Activated naive CD4-positive, alpha-beta T cell treated with anti-CD3 and anti-CD28 coated beads for 36 hours (primary cell): ENCODE measurements at regions of chr1 and their contacts with region 1.

Region 1: GRCh38 chr1:156705918-156706656 is 704 bp upstream of the CRABP2 start:
- DNase-seq: peak; percentile 77
- H3K4me3 Mint-ChIP-seq: peak overlapping the region; percentile 76
- H3K27ac Mint-ChIP-seq: peak overlapping the region; percentile 46
- H3K4me1 Mint-ChIP-seq: peaks cover 27% of the 10 kb centered on the region
- H3K27me3 Mint-ChIP-seq: peaks cover 25% of the 10 kb centered on the region

Region 2: GRCh38 chr1:156618853-156619581 is 87.1 kb before region 1 on chr1 and contains the start of gene HAPLN2:
- CTCF ChIA-PET with region 1: interaction called, 21 read pairs
- intact Hi-C with region 1: no loop called
- DNase-seq: peak; percentile 45
- H3K4me3 Mint-ChIP-seq: no peak within 1 kb of the TSS
- H3K27ac Mint-ChIP-seq: no peak within 1 kb of the TSS
- H3K4me1 Mint-ChIP-seq: no peaks in the 10 kb centered on the region
- H3K27me3 Mint-ChIP-seq: peaks cover 40% of the 10 kb centered on the region
- total RNA-seq, gene HAPLN2: 0.40 to 0.55 TPM

Region 3: DNA sequence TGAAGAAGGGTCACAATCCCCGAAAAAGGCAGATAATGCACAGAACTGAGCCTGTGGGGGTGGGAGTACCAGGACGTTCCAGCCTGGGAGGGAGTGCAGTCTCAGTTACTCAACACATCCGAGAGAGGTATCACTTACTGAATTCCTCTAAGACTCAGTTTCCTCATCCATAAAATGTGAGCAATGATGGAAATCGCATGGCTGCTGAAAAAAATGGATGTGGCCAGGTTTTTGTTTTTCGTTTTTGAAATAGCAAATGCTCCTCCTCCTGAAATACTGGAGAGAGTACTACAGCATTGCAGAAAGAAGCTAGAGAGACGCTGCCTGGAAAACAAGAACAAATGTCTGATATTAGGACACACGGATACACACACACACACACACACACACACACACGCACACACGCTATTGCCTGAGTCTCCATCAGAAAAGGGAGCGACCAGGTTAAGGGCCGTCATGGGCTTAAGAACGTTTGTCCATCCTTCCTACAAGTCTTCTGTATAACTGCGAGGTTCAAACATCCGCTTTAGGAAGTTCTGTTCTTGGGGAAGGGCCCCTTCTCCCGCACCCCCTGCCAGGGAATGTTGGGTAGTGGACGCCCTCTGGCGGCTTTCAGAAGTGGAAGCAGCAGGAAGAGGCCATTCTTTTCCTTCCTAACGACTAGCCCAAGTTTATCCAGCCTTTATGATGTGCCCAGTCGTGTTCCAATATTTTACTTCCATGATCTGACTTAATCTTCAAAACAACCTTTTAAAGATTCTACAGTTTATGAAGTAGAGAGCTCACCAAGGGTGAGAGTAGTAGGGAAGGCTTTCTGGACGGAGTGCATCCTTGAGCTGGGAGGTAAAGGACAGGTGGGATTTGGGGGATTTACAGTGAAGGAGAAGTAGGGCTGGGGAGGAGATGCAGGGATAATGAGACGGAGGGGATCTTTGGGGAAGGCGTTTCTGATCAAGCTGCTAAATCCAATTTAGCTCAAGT is 28.2 kb before region 1 on chr1:
- CTCF ChIA-PET with region 1: interaction called, 26 read pairs
- intact Hi-C with region 1: no loop called
- DNase-seq: peak; percentile 49
- H3K4me3 Mint-ChIP-seq: no peak overlapping the region
- H3K27ac Mint-ChIP-seq: no peak overlapping the region
- H3K4me1 Mint-ChIP-seq: peaks cover 14% of the 10 kb centered on the region
- H3K27me3 Mint-ChIP-seq: peaks cover 50% of the 10 kb centered on the region

Region 4: GRCh38 chr1:156717275-156717805 is 11.3 kb after region 1 on chr1:
- CTCF ChIA-PET with region 1: interaction called, 17 read pairs
- intact Hi-C with region 1: loop called (anchors 1 kb)
- DNase-seq: no peak
- H3K4me3 Mint-ChIP-seq: no peak overlapping the region
- H3K27ac Mint-ChIP-seq: no peak overlapping the region
- H3K4me1 Mint-ChIP-seq: peaks cover 6% of the 10 kb centered on the region
- H3K27me3 Mint-ChIP-seq: no peaks in the 10 kb centered on the region

Region 5: DNA sequence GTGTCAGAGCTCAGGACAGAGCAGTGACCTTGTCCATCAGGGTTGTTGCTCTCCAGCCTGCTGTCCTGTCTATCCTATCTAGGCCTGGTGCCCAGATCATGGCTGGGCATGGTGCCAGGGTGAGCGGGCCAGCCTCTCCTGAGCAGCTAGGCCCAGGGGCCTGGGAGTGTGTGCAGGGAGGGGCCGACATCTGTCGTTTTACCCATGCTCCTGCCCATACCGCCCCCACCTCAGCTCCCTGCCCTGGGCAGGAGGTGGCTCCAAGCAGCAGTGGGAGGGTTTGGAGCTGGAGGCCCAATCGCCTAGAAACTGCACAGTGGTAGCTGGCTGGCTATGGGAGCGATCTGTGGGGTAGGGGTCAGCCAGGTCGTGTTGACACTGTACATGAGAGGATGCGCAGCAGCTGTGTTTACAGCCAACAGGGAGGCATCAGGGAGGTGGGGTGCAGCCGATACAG is 146.4 kb after region 1 on chr1:
- CTCF ChIA-PET with region 1: no interaction called
- intact Hi-C with region 1: no loop called
- DNase-seq: no peak
- H3K4me3 Mint-ChIP-seq: no peak overlapping the region
- H3K27ac Mint-ChIP-seq: no peak overlapping the region
- H3K4me1 Mint-ChIP-seq: peaks cover 12% of the 10 kb centered on the region
- H3K27me3 Mint-ChIP-seq: peaks cover 15% of the 10 kb centered on the region